ENCODE measurements at regions of chr16 and their contacts with region 1.

Region 1: GRCh38 chr16:77165006-77165405 is 26.0 kb upstream of the MON1B start:
- DNase-seq: no peak
- H3K4me3 Mint-ChIP-seq: no peak overlapping the region
- H3K27ac Mint-ChIP-seq: no peak overlapping the region
- H3K4me1 Mint-ChIP-seq: no peaks in the 10 kb centered on the region
- H3K27me3 Mint-ChIP-seq: peaks cover 63% of the 10 kb centered on the region
- CTCF ChIP-seq: no peak

Region 2: GRCh38 chr16:77048085-77048484 is 116.9 kb before region 1 on chr16:
- CTCF ChIA-PET with region 1: no interaction called
- intact Hi-C with region 1: loop called (anchors 2 kb)
- DNase-seq: no peak
- H3K4me3 Mint-ChIP-seq: no peak overlapping the region
- H3K27ac Mint-ChIP-seq: no peak overlapping the region
- H3K4me1 Mint-ChIP-seq: no peaks in the 10 kb centered on the region
- H3K27me3 Mint-ChIP-seq: no peaks in the 10 kb centered on the region
- CTCF ChIP-seq: no peak

Region 3: GRCh38 chr16:77183137-77183536 is 18.1 kb after region 1 on chr16:
- CTCF ChIA-PET with region 1: no interaction called
- intact Hi-C with region 1: no loop called
- DNase-seq: no peak
- H3K4me3 Mint-ChIP-seq: no peak overlapping the region
- H3K27ac Mint-ChIP-seq: no peak overlapping the region
- H3K4me1 Mint-ChIP-seq: no peaks in the 10 kb centered on the region
- H3K27me3 Mint-ChIP-seq: no peaks in the 10 kb centered on the region
- CTCF ChIP-seq: no peak

Region 4: GRCh38 chr16:77236063-77236511 is 71.1 kb after region 1 on chr16:
- CTCF ChIA-PET with region 1: no interaction called
- intact Hi-C with region 1: no loop called
- DNase-seq: peak; percentile 93
- H3K4me3 Mint-ChIP-seq: peak overlapping the region; percentile 36
- H3K27ac Mint-ChIP-seq: no peak overlapping the region
- H3K4me1 Mint-ChIP-seq: peaks cover 22% of the 10 kb centered on the region
- H3K27me3 Mint-ChIP-seq: peaks cover 17% of the 10 kb centered on the region
- CTCF ChIP-seq: peak; percentile 100

Measured in Calu3 (cell line).